ENCODE measurements at regions of chr20 and their contacts with region 1.

Region 1: GRCh38 chr20:63641792-63642544 is 11.3 kb downstream of the STMN3 start:
- DNase-seq: peak; percentile 48
- ATAC-seq: peak; percentile 78
- H3K4me3 ChIP-seq: peak overlapping the region; percentile 92
- H3K27ac ChIP-seq: peak overlapping the region; percentile 74
- H3K4me1 ChIP-seq: peaks cover 17% of the 10 kb centered on the region
- H3K27me3 ChIP-seq: no peaks in the 10 kb centered on the region; a peak in 1 of 4 replicates
- CTCF ChIP-seq: peak; percentile 38 to 51 (median 41); a peak in 5 of 6 replicates
- EP300 ChIP-seq: no peak
- POLR2A ChIP-seq: no peak
- RAD21 ChIP-seq: peak; percentile 44

Region 2: DNA sequence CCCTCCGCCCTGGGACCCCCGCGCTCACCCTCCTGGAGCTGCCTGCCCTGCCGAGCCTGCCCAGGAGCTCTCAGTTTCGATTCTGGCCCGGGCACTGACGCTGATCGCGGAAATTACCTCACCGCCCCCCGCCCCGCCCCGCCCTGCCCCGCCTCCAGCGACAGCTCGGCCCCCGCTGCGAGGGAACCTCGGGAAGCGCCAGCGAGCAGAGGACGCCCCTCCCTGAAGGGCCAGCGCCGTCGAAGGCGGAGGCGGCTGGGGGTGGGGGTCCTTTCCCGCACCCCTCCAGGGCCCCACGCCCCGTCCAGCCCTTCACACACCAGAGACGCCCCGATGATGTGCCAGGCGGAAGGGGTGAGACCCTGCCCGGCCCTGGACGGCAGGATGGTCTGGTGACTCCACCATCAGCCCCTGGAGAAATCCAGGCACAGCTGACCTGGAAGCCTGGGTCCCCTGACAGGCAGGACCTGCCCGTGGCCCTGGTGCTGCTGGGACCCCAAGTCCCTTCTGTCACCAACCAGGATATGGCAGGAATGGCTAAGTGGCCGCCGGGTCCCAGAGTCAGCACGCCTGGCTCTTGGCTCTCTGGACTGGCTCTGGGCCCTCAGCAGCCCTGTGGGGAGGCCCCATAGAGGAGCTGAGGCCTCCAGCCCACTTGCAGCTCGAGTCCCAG is 67.7 kb before region 1 on chr20 and contains the start of gene HELZ2:
- CTCF ChIA-PET with region 1: interaction called, 10 read pairs
- POLR2A ChIA-PET with region 1: interaction called, 9 read pairs
- RAD21 ChIA-PET with region 1: interaction called, 10 read pairs
- SMC1A ChIA-PET with region 1: no interaction called
- in situ Hi-C with region 1: no loop called
- intact Hi-C with region 1: no loop called
- DNase-seq: no peak
- ATAC-seq: peak; percentile 93
- H3K4me3 ChIP-seq: peak within 1 kb of the TSS; percentile 90
- H3K27ac ChIP-seq: no peak within 1 kb of the TSS; the same call in 1 of the 2 replicates
- H3K4me1 ChIP-seq: peaks cover 10% of the 10 kb centered on the region
- H3K27me3 ChIP-seq: no peaks in the 10 kb centered on the region
- CTCF ChIP-seq: no peak
- EP300 ChIP-seq: no peak
- POLR2A ChIP-seq: peak; percentile 65
- RAD21 ChIP-seq: no peak
- polyA plus RNA-seq, gene HELZ2: 0.05 to 0.08 TPM

Region 3: DNA sequence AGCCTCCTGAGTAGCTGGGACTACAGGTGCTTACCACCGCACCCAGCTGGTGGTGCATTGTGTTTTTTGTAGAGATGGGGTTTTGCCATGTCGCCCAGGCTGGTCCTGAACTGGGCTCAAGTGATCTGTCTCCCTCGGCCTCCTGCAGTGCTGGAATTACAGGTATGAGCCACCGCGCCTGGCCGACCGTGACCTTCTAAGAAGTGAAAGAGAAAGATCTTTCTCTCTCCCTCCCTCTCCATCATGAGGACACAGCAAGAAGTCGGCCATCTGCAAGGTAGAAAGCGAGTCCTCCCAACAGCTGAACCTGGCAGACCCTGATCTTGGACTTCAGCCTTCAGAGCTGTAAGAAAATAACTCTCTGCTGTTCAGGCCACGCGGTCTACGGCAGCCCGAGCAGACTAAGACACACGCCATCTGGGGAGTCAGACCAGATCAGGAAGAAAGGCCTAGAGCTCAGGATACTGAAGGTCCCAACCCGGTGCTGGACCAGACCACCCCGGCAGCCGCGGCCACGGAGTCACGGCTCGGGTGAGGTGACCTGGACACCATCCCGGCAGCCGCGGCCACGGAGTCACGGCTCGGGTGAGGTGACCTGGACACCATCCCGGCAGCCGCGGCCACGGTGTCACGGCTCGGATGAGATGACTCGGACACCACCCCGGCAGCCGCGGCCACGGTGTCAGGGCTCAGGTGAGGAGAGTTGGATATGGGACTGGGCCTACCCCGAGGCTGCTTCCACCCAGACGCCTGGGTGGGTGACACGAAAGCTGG is 24.7 kb before region 1 on chr20:
- CTCF ChIA-PET with region 1: interaction called, 16 read pairs
- POLR2A ChIA-PET with region 1: interaction called, 3 read pairs
- RAD21 ChIA-PET with region 1: interaction called, 3 read pairs
- SMC1A ChIA-PET with region 1: interaction called, 5 read pairs
- in situ Hi-C with region 1: no loop called
- intact Hi-C with region 1: no loop called
- DNase-seq: no peak
- ATAC-seq: peak; percentile 45
- H3K4me3 ChIP-seq: no peak overlapping the region
- H3K27ac ChIP-seq: peak overlapping the region; percentile 54
- H3K4me1 ChIP-seq: peaks cover 7% of the 10 kb centered on the region
- H3K27me3 ChIP-seq: no peaks in the 10 kb centered on the region
- CTCF ChIP-seq: no peak
- EP300 ChIP-seq: no peak
- POLR2A ChIP-seq: no peak
- RAD21 ChIP-seq: no peak

Region 4: DNA sequence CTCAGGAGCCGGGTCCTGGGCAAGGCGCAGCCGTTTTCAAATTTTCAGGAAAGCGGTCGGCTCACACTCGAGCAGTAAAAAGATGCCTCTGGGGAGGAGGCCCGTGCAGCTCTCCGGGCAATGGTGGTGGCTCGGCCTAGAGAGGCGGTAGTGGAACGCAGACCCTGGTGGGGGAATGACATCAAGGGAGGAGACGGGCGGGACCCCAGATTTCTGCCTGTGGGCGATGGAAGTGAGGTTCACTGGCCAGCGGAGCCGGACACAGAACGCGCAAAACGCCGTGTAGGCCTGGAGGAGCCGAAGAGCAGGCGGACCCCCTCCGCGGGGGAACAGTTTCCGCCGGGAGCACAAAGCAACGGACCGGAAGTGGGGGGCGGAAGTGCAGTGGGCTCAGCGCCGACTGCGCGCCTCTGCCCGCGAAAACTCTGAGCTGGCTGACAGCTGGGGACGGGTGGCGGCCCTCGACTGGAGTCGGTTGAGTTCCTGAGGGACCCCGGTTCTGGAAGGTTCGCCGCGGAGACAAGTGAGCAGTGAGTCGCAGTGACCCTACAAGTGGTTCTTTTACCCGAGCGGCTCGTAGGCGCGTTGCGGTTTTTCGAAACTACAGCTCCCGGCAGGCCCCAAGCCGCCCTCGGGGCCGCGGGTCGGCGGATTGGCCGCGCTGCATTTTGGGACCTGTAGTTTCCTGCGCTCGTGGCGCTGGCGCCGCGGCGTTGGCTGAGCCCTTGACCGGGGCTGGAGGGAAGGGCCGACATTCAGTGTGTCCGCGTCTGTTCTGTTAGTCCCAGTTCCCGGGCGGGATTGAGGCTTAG is 16.2 kb after region 1 on chr20 and contains the start of gene RTEL1:
- CTCF ChIA-PET with region 1: interaction called, 10 read pairs
- POLR2A ChIA-PET with region 1: interaction called, 13 read pairs
- RAD21 ChIA-PET with region 1: interaction called, 12 read pairs
- SMC1A ChIA-PET with region 1: interaction called, 7 read pairs
- in situ Hi-C with region 1: no loop called
- intact Hi-C with region 1: no loop called
- DNase-seq: peak; percentile 59
- ATAC-seq: peak; percentile 98
- H3K4me3 ChIP-seq: peak within 1 kb of the TSS; percentile 93
- H3K27ac ChIP-seq: peak within 1 kb of the TSS; percentile 84
- H3K4me1 ChIP-seq: peaks cover 8% of the 10 kb centered on the region
- H3K27me3 ChIP-seq: peaks cover 2 to 7% of the 10 kb centered on the region in 2 experiments; a peak in 2 of 4 replicates
- CTCF ChIP-seq: no peak
- EP300 ChIP-seq: no peak
- POLR2A ChIP-seq: no peak; the same call in none of the 2 replicates
- RAD21 ChIP-seq: no peak
- polyA plus RNA-seq, gene RTEL1: 0.40 TPM in 1 of 2 experiments, not detected in the other